GM12878 (cell line): ENCODE measurements at regions of chr3 and their contacts with region 1.

Region 1: GRCh38 chr3:46558184-46559043 is 7.7 kb downstream of the LRRC2 start:
- DNase-seq: peak; percentile 75
- ATAC-seq: peak; percentile 100
- H3K4me3 ChIP-seq: peak overlapping the region; percentile 66
- H3K27ac ChIP-seq: no peak overlapping the region
- H3K4me1 ChIP-seq: no peaks in the 10 kb centered on the region
- H3K27me3 ChIP-seq: no peaks in the 10 kb centered on the region
- CTCF ChIP-seq: peak; percentile 88 to 95 (median 88)
- EP300 ChIP-seq: no peak
- POLR2A ChIP-seq: no peak
- RAD21 ChIP-seq: peak; percentile 97

Region 2: GRCh38 chr3:45995236-45996192 is 562.9 kb before region 1 on chr3 and contains the start of gene FYCO1:
- CTCF ChIA-PET with region 1: no interaction called
- POLR2A ChIA-PET with region 1: no interaction called
- RAD21 ChIA-PET with region 1: no interaction called
- SMC1A ChIA-PET with region 1: no interaction called
- in situ Hi-C with region 1: no loop called
- intact Hi-C with region 1: no loop called
- DNase-seq: peak; percentile 59
- ATAC-seq: peak; percentile 94
- H3K4me3 ChIP-seq: peak within 1 kb of the TSS; percentile 79
- H3K27ac ChIP-seq: peak within 1 kb of the TSS; percentile 90
- H3K4me1 ChIP-seq: peaks cover 30% of the 10 kb centered on the region
- H3K27me3 ChIP-seq: no peaks in the 10 kb centered on the region
- CTCF ChIP-seq: no peak
- EP300 ChIP-seq: peak in 1 of 2 experiments; percentile 34; a peak in 1 of 4 replicates
- POLR2A ChIP-seq: peak; percentile 88
- RAD21 ChIP-seq: no peak
- polyA plus RNA-seq, gene FYCO1: 1.5 to 2.2 TPM

Region 3: DNA sequence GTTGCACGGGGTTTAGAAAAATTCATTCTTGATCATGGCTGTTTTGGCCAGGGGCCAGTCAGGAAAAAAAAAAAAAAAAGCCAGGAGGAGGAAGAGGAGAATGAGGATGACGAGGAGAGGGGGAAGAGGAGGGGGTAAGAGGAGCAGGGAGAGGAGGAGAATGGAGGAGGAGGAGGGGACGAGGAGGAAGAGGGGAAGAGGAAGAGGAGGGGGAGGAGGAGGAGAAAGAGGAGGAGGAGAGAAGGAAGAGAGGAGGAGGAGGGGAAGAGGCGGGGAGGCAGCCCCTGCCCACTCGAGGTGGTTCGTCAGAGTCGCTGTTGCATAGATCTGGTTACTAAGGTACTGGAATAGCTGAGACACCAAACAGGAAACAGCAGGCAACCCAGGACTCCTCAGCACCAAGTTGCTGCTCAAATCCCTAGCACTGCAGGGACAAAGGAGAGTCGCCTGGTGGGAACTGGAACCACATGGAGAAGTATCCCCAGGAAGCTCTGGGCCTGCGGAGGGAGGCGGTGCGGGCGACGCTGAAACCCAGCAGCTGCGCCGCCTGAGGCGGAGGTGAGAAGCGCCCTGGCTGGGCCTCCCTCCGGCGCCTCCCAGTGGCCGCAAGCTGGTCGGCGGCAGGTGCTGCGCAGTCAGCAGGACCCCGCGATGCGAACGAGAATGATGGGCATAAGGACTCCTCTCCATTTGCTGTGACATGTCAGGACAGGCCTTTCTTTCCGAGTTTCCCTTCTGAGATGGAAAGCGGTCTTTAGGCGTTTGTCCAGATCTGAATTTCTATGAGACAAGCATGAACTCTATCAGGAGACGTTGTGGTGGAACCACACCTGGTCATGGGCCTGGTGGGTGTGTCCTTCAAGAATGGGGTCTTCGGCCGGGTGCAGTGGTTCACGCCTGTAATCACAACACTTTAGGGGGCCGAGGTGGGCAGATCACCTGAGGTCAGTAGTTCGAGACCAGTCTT is 71.4 kb after region 1 on chr3:
- CTCF ChIA-PET with region 1: interaction called, 9 read pairs
- POLR2A ChIA-PET with region 1: no interaction called
- RAD21 ChIA-PET with region 1: interaction called, 11 read pairs
- SMC1A ChIA-PET with region 1: interaction called, 3 read pairs
- in situ Hi-C with region 1: no loop called
- intact Hi-C with region 1: loop called (anchors 1 kb)
- DNase-seq: peak; percentile 19
- ATAC-seq: peak; percentile 100
- H3K4me3 ChIP-seq: no peak overlapping the region
- H3K27ac ChIP-seq: no peak overlapping the region
- H3K4me1 ChIP-seq: peaks cover 3% of the 10 kb centered on the region; the same call in 1 of the 2 replicates
- H3K27me3 ChIP-seq: no peaks in the 10 kb centered on the region
- CTCF ChIP-seq: peak; percentile 99 to 100 (median 99)
- EP300 ChIP-seq: no peak
- POLR2A ChIP-seq: no peak
- RAD21 ChIP-seq: peak; percentile 66